ENCODE measurements at regions of chr11 and their contacts with region 1.

Region 1: GRCh38 chr11:57842873-57843272 is 81.3 kb downstream of the CTNND1 start:
- DNase-seq: no peak
- ATAC-seq: no peak
- H3K4me3 ChIP-seq: no peak overlapping the region
- H3K27ac ChIP-seq: no peak overlapping the region
- H3K4me1 ChIP-seq: no peaks in the 10 kb centered on the region
- H3K27me3 ChIP-seq: no peaks in the 10 kb centered on the region
- CTCF ChIP-seq: no peak
- POLR2A ChIP-seq: no peak

Region 2: DNA sequence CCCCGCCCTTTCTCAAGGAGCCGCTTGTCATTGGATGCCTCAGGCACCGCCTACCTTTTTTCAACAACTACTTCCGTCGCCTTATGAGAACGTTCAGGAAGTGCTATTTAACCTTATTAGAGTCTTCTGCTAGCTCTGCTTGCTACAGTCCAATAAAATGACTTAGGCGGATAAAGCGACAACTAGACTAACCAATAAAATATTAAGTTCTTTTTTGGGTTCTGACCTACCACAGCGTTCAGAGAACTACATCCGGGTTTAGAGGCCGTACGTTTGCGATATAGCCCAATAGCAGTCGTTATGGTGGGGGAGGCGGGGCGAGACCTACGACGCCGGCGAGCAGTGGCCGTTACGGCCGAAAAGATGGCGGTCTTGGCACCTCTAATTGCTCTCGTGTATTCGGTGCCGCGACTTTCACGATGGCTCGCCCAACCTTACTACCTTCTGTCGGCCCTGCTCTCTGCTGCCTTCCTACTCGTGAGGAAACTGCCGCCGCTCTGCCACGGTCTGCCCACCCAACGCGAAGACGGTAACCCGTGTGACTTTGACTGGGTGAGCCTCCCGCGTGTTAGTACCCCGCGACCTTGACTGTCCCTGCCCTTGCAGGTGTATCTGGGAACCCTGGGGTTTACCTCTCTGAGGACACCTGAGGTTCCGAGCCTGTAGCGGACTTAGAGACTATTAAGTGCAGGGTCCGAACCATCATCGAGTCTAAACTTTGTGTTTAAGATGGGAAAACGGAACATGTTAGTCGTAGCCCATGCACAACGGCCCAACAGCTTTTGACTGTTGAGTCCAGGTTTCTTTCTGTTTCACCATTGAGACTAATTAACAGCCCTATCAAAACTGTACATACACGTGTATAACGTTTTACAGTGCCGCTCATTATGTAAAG is 130.4 kb before region 1 on chr11 and contains the start of gene TMX2:
- intact Hi-C with region 1: no loop called
- DNase-seq: peak; percentile 92 to 96 (median 94)
- ATAC-seq: peak; percentile 97 to 98 (median 97)
- H3K4me3 ChIP-seq: peak within 1 kb of the TSS; percentile 68 to 100 (median 90)
- H3K27ac ChIP-seq: peak within 1 kb of the TSS; percentile 73 to 95 (median 91)
- H3K4me1 ChIP-seq: peaks cover 0 to 47% (median 31%) of the 10 kb centered on the region in 12 donors
- H3K27me3 ChIP-seq: no peaks in the 10 kb centered on the region
- CTCF ChIP-seq: no peak
- POLR2A ChIP-seq: no peak
- total RNA-seq, gene TMX2: 46.7 to 78.2 (median 65.8) TPM

Region 3: DNA sequence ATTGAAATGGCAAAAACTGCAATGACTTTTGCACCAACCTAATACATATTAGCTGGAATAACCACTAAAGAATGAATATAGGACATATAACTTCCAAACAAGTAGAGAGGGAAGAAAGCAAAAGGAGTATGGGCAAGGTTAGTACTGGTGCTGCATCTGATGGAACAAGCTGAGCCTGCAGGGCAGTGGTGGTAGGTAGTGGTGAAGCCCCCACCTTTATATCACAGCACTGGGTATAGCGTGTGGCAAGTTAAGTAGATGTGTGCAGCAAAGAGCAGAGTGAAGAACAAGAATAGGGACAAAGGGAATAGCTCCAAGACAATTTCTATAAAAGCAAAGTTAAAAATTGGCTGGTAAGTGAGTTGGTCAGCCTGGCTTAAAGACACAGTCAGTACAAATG is 19.0 kb before region 1 on chr11:
- intact Hi-C with region 1: no loop called
- DNase-seq: no peak
- ATAC-seq: no peak
- H3K4me3 ChIP-seq: no peak overlapping the region
- H3K27ac ChIP-seq: no peak overlapping the region
- H3K4me1 ChIP-seq: peaks cover 0 to 10% (median 0%) of the 10 kb centered on the region in 12 donors
- H3K27me3 ChIP-seq: no peaks in the 10 kb centered on the region
- CTCF ChIP-seq: no peak
- POLR2A ChIP-seq: no peak

Region 4: GRCh38 chr11:58061813-58062212 is 218.9 kb after region 1 on chr11:
- intact Hi-C with region 1: loop called in 1 of 10 experiments (anchors 10 kb)
- DNase-seq: no peak
- ATAC-seq: no peak
- H3K4me3 ChIP-seq: no peak overlapping the region
- H3K27ac ChIP-seq: no peak overlapping the region
- H3K4me1 ChIP-seq: peaks cover 0 to 25% (median 10%) of the 10 kb centered on the region in 12 donors
- H3K27me3 ChIP-seq: no peaks in the 10 kb centered on the region
- CTCF ChIP-seq: no peak
- POLR2A ChIP-seq: no peak

Region 5: GRCh38 chr11:58286249-58286648 is 443.4 kb after region 1 on chr11:
- intact Hi-C with region 1: loop called in 1 of 10 experiments (anchors 10 kb)
- DNase-seq: no peak
- ATAC-seq: peak in 3 of 4 donors; percentile 50 to 59 (median 58)
- H3K4me3 ChIP-seq: no peak overlapping the region
- H3K27ac ChIP-seq: peak overlapping the region in 1 of 12 donors; percentile 7
- H3K4me1 ChIP-seq: peaks cover 0 to 5% (median 0%) of the 10 kb centered on the region in 12 donors
- H3K27me3 ChIP-seq: no peaks in the 10 kb centered on the region
- CTCF ChIP-seq: peak; percentile 28 to 65 (median 52)
- POLR2A ChIP-seq: no peak

Region 6: DNA sequence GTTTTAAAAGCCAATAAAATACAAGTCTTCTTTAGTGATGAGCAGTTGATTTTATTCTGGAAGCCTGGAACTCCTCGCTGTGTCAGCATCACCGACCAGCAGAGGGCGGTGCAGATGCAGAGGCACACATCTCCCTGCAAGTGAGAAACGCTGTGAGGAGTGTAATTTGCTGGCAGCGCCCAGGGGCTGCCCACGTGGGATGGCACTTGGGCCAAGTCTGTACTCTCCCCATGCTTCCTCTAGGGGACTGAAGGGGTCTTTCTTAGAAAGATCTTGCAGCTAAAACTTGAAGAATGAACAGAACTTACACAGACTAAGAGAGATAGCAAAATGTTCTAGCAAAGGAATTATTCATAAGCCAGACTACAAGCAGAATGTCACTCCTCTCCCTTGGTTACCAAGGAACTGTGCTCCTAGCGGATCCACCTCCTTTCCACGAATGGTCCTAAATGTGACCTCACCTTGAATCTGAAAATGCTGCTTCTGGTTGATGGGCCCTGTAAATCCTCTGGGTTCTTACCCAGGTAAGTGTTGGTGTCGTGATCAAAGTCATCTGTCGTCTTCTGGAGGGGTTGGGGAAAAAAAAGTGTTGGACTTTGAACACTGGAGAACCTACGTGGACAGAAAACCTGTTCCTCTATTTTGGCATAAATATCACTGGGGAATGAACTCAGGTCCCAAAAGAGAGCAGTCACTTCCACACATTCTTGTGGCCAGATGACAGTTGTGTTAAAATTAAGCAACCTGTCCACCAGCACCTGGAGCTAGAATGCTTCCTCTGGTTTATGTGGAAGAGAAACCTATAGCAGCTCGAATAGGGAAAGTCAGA is 811.4 kb after region 1 on chr11:
- intact Hi-C with region 1: no loop called
- DNase-seq: peak; percentile 70 to 89 (median 78)
- ATAC-seq: peak; percentile 79 to 97 (median 92)
- H3K4me3 ChIP-seq: no peak overlapping the region
- H3K27ac ChIP-seq: no peak overlapping the region
- H3K4me1 ChIP-seq: peaks cover 0 to 21% (median 4%) of the 10 kb centered on the region in 12 donors
- H3K27me3 ChIP-seq: no peaks in the 10 kb centered on the region
- CTCF ChIP-seq: peak; percentile 75 to 95 (median 88)
- POLR2A ChIP-seq: no peak